BJ (cell line): ENCODE measurements at regions of chr9 and their contacts with region 1.

Region 1: GRCh38 chr9:123349691-123350480 is 6.1 kb upstream of the CRB2 start:
- DNase-seq: no peak
- H3K4me3 ChIP-seq: no peak overlapping the region
- H3K27me3 ChIP-seq: peaks cover 24% of the 10 kb centered on the region
- CTCF ChIP-seq: peak; percentile 97

Region 2: GRCh38 chr9:123081824-123082223 is 268.1 kb before region 1 on chr9:
- CTCF ChIA-PET with region 1: interaction called, 65 read pairs
- POLR2A ChIA-PET with region 1: no interaction called
- DNase-seq: no peak
- H3K4me3 ChIP-seq: no peak overlapping the region
- H3K27me3 ChIP-seq: no peaks in the 10 kb centered on the region
- CTCF ChIP-seq: peak; percentile 61

Region 3: DNA sequence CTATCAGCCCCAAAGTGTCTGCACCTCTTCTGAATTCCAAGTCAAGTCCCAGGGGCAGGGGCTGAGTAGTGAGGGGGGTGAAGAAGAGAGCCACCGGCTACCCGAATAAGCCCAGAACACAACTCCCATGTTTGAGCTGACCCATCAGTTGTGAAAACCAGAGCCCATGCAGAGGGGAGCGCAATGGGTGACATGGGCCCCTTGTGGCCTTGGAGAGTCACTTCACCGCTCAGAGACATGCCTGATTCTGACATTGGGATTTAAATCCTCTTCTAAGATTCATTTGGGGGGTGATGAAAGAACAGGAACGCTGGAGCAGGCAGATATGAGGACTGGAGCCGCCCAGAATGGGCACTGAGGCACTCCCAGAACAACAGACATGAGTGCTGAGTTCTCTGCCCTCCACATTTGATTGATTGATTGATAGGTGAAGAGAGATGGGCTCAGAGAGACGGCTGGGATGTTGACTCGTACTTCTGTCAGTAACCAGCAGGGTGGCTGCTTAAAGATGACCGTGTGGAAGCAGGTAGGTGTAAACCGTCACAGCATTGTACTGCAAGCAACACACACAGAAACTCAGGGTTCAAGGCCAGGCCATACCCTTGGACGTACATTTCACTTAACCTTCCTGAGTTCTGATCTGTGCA is 242.1 kb before region 1 on chr9:
- CTCF ChIA-PET with region 1: interaction called, 11 read pairs
- POLR2A ChIA-PET with region 1: no interaction called
- DNase-seq: no peak
- H3K4me3 ChIP-seq: no peak overlapping the region
- H3K27me3 ChIP-seq: no peaks in the 10 kb centered on the region
- CTCF ChIP-seq: no peak

Region 4: DNA sequence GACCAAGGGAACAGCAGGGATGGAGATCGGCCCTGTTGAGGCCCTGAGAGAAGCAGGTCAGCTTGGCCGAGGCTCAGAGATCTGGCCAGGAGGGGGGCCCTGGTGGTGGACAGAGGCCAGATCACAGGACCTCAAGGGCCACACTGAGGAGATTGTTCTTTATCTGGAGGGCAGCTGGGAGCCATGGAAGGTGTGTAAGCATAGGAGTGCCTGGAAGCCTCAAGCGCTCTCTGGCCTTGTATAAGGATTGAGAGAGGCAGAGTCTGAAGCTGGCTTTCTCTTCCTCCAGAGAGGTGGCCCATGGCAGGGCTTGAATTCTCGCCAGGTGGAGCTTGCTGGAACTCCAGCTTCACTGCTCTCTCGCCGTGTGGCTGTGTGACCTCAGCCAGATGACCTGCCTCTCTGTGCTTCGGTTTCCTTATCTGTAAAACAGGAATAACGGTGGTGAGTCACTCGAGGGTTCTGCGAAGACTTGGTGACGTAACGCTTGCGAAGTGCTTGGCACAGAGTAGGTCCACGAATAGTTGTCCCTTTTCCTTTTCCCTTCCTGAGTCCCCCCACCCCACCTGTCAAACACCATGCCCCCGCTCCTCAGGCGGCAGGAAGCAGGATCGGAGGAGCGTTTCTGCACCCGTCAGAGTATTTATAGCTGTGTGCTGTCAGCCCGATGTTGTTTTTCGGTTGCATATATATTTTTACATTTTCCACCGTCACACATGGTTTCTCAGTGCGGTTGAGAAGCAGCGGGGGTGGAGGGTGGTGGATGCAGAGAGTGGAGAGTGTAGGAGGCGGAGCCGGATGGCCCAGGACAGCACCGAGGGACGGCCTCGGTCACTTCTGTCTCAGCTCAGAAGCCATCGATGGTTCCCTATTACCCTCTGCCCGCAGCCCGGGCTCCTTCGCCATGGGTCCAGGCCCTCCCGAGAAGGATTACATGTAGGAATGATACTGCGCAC is 10.9 kb before region 1 on chr9:
- CTCF ChIA-PET with region 1: interaction called, 45 read pairs
- POLR2A ChIA-PET with region 1: no interaction called
- DNase-seq: no peak
- H3K4me3 ChIP-seq: no peak overlapping the region
- H3K27me3 ChIP-seq: peaks cover 3% of the 10 kb centered on the region
- CTCF ChIP-seq: no peak

Region 5: GRCh38 chr9:123382653-123383511 is 33.0 kb after region 1 on chr9:
- CTCF ChIA-PET with region 1: interaction called, 58 read pairs
- POLR2A ChIA-PET with region 1: no interaction called
- DNase-seq: no peak
- H3K4me3 ChIP-seq: no peak overlapping the region
- H3K27me3 ChIP-seq: no peaks in the 10 kb centered on the region
- CTCF ChIP-seq: no peak